Calu3 (cell line): ENCODE measurements at regions of chr3 and their contacts with region 1.

Region 1: GRCh38 chr3:39126532-39127071 is 19.1 kb downstream of the TTC21A start:
- DNase-seq: peak; percentile 68
- H3K4me3 Mint-ChIP-seq: peak overlapping the region; percentile 60
- H3K27ac Mint-ChIP-seq: peak overlapping the region; percentile 80
- H3K4me1 Mint-ChIP-seq: peaks cover 24% of the 10 kb centered on the region
- H3K27me3 Mint-ChIP-seq: no peaks in the 10 kb centered on the region
- CTCF ChIP-seq: peak; percentile 29

Region 2: DNA sequence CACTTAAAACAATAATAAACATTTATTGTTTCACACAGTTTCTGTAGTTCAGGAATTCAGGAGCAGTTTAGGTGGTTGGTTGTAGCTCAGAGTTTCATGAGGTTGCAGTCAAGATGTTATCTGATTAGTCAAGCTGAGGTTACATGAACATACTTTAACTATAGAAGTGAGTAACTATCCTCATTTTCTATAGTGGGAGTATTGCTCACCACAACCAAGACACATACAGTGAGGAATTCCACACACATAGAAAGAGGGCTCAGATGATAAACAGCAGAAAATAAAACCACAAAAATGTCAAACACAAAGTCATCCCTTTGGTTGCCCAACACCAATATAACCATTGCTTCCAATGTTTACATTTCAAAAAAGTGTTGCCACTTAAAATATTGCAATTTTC is 88.4 kb before region 1 on chr3:
- CTCF ChIA-PET with region 1: no interaction called
- intact Hi-C with region 1: no loop called
- DNase-seq: no peak
- H3K4me3 Mint-ChIP-seq: no peak overlapping the region
- H3K27ac Mint-ChIP-seq: no peak overlapping the region
- H3K4me1 Mint-ChIP-seq: no peaks in the 10 kb centered on the region
- H3K27me3 Mint-ChIP-seq: peaks cover 30% of the 10 kb centered on the region
- CTCF ChIP-seq: no peak

Region 3: DNA sequence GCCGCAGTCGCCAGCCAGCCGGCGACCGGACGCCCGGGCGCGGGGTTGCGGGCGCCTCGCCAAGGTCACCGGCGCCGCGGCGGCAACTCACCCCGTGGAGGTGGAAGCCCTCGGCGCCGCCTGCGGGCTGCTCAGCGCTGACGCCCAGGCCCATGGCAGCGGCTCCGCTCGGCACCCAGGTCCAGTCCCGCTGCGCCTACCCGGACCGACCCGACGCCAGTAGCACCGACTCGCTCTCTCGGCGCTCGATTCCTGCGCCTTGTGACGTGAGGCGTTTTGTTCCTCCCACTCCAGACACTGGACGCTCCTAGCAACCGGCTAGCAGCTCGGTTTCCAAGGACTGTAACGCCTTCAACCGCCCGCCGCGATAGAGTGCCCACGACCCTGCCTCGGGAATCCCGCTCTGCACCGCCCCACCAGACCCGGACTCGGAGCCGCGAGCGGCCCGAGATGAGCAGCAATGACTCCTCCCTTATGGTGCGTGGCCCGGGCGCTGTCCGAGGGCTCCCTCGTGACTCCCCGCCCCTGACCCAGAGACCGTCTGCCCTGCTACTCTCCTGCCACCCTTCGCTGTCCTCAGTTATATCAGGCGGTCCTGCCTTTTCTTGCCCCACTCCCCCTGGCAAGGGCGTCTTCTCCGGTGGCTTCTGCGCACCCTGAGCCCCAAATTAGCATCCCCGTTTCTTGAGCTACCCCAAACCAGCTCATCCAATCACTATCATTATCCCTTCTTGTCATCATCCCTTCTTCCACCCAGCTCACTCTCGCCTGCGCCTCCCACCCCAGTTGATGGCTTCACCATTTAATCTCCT is 19.0 kb before region 1 on chr3 and contains the starts of genes GORASP1 and TTC21A:
- CTCF ChIA-PET with region 1: interaction called, 5 read pairs
- intact Hi-C with region 1: loop called (anchors 1 kb)
- DNase-seq: peak; percentile 69
- H3K4me3 Mint-ChIP-seq: peak within 1 kb of the TSS; percentile 92
- H3K27ac Mint-ChIP-seq: peak within 1 kb of the TSS; percentile 73
- H3K4me1 Mint-ChIP-seq: peaks cover 45% of the 10 kb centered on the region
- H3K27me3 Mint-ChIP-seq: no peaks in the 10 kb centered on the region
- CTCF ChIP-seq: no peak
- total RNA-seq, gene GORASP1: 54.8 and 58.6 TPM in 2 replicates
- total RNA-seq, gene TTC21A: 8.1 and 9.1 TPM in 2 replicates

Region 4: DNA sequence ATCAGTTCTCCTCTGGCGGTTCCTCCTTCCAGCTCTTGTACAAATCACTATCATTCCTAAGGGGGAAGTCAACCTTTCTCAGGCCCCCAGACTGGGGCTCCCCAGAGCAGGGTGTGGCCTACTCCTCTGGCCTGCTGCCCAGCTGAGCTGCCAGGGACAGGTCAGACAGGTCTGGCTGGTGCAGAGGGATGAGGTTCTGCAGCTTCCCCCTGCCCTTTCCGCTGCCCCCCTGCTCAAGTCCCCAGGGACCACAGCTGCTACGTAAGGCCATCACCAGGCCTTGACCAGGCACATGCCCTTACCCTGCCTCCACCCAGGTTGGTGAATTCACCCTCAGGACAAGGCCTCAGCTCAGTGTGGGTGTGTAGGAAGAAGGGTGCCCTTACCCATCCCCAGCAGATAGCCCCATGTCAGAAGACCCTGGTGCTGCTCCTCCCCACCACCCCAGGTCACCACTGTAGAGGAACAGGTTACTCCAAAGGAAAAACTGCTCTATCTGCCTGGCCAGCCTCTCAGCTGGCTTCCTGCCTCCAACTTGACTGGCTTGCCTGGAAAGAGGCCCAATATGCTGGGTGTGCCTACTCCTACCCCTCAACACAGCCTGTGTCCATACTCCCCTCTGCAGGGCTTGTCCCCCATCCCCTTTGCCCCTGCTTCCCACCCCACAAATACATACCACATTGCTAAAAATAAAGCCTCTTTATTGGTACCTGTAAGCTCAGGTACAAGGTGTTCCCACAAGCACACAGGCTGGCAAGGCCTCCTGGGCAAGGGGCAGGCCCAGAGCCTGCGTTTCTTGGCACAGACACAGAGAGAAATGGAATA is 14.8 kb after region 1 on chr3:
- CTCF ChIA-PET with region 1: interaction called, 18 read pairs
- intact Hi-C with region 1: loop called (anchors 2 kb)
- DNase-seq: peak; percentile 92
- H3K4me3 Mint-ChIP-seq: peak overlapping the region; percentile 52
- H3K27ac Mint-ChIP-seq: peak overlapping the region; percentile 89
- H3K4me1 Mint-ChIP-seq: peaks cover 36% of the 10 kb centered on the region
- H3K27me3 Mint-ChIP-seq: no peaks in the 10 kb centered on the region
- CTCF ChIP-seq: no peak

Region 5: GRCh38 chr3:39177708-39178332 is 51.2 kb after region 1 on chr3:
- CTCF ChIA-PET with region 1: interaction called, 10 read pairs
- intact Hi-C with region 1: loop called (anchors 5 kb)
- DNase-seq: peak; percentile 72
- H3K4me3 Mint-ChIP-seq: peak overlapping the region; percentile 66
- H3K27ac Mint-ChIP-seq: peak overlapping the region; percentile 81
- H3K4me1 Mint-ChIP-seq: peaks cover 29% of the 10 kb centered on the region
- H3K27me3 Mint-ChIP-seq: no peaks in the 10 kb centered on the region
- CTCF ChIP-seq: no peak

Region 6: DNA sequence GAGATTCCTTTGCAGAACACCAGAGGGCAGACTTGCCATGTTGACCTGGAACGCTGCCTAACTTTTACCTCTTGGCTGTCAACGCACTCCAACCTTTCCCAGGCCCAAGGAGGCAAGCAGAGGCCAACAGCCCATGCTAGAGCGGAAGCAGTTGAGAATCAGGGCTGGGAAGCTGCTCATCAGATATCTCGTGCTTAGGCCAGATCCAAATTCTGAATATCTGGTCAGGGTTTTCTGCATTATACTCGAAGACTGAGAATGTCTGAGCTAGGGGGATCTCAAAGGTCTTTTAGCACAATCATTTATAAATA is 63.3 kb after region 1 on chr3:
- CTCF ChIA-PET with region 1: interaction called, 10 read pairs
- intact Hi-C with region 1: loop called (anchors 2 kb)
- DNase-seq: peak; percentile 68
- H3K4me3 Mint-ChIP-seq: no peak overlapping the region
- H3K27ac Mint-ChIP-seq: no peak overlapping the region
- H3K4me1 Mint-ChIP-seq: peaks cover 15% of the 10 kb centered on the region
- H3K27me3 Mint-ChIP-seq: no peaks in the 10 kb centered on the region
- CTCF ChIP-seq: no peak

Region 7: DNA sequence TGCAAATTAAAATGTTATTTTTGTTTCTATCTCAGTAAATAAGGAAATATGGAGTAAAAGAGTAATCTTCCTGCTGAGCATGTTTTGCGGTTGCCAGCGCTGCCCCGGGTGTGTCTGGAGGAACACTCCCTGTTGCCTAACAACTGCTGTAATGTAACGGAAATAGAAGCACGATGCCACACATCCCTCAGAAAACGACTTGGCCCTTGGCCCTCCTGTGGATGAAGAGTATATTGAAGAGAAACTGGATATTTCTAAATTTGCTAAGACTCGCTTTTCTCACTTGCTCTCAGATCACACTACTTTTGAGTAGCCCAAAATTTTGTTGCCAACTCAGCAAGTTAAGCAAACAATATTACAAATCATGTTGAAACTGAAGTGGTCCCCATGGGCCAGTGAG is 134.4 kb after region 1 on chr3:
- CTCF ChIA-PET with region 1: interaction called, 5 read pairs
- intact Hi-C with region 1: loop called (anchors 1 kb)
- DNase-seq: peak; percentile 78
- H3K4me3 Mint-ChIP-seq: no peak overlapping the region
- H3K27ac Mint-ChIP-seq: peak overlapping the region; percentile 48
- H3K4me1 Mint-ChIP-seq: peaks cover 6% of the 10 kb centered on the region
- H3K27me3 Mint-ChIP-seq: peaks cover 82% of the 10 kb centered on the region
- CTCF ChIP-seq: no peak